ENCODE measurements at regions of chr6 and their contacts with region 1.

Region 1: DNA sequence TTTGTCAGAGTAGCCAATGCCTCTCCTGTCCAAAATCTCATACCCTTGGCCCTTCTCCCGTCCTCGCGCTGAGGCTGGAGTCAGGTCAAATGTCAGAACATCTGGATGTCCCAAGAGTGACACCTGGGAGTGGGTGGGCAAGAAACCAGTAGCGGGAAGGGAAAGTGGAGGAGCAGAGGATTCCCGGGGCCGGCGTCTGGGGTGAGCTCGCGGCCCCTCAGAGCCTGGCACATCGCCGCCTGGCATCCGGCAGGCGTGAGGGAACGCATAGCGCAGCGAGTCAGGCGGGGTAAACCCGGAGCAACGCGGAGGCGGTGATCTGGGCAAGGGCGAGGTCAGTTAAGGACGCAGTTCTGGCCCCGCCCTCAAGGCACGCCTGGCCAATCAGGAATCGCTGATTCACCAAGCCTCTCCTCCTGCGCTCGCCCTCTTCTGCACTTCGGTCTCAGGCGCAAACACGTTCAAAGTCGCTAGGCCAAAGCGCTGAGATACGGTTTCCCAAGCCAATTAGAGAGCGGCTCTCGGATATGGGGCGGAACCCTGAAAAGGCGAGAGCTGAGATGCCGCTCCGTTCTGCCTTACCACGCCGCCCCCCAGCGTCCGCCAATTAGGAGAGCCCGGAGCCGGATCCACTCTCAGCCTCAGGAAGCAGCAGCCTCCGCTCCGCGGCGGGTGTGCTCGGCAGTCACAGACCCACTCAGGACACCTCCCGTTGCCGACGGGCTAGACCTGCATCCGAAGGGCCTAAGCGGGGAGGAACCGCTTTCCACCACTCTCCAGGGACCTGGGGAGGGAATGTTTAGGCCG is 22.5 kb downstream of the VPS52 start:
- DNase-seq: peak; percentile 99
- ATAC-seq: peak; percentile 97

Region 2: DNA sequence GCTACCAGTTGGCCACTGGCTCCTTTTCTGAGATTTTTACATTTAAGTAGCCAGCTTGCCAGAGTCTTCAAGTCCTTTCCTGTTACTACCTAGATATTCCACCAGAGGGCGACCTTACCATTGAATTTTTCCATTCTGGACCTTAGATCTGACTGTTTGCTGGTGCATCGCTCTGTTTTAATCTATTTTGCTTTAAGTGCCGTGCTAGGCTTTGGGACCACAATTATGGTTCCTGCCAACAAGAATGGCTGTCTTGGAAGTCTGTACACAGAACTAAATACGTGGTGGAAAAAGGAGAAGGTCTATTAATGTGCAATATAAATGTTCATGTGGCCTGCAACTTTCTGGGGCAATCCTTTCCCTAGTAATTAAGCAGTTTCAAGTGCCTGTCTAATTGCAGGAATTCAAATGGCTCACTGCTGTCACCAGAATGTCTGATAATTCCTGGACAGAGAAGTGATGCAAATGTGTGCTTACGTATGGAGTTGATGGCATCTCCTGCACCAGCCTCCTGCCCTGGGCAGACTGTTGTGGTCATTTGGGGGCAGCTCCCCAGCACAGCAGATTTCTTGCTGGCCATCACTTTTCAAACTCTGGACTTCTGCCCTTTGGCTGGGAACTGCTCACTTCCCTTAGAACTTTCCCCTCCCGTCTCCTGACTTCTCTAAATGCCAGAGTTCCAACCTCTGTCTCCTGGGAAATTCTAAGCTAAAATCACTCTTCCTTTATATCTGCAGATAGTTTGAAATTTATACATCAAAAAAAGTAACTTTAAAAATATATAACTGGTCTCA is 234.1 kb before region 1 on chr6:
- intact Hi-C with region 1: loop called (anchors 5 kb)
- DNase-seq: no peak
- ATAC-seq: peak; percentile 80

Region 3: GRCh38 chr6:33118525-33119123 is 130.5 kb before region 1 on chr6:
- intact Hi-C with region 1: loop called (anchors 5 kb)
- DNase-seq: no peak
- ATAC-seq: peak; percentile 46

Region 4: GRCh38 chr6:33161354-33162331 is 87.5 kb before region 1 on chr6:
- intact Hi-C with region 1: loop called (anchors 5 kb)
- DNase-seq: peak; percentile 90
- ATAC-seq: peak; percentile 95

Region 5: GRCh38 chr6:33200219-33201146 is 48.6 kb before region 1 on chr6 and contains the starts of genes RXRB and SLC39A7:
- intact Hi-C with region 1: loop called (anchors 5 kb)
- DNase-seq: peak; percentile 100
- ATAC-seq: peak; percentile 90
- total RNA-seq, gene RXRB: 37.9 TPM
- total RNA-seq, gene SLC39A7: 46.0 TPM